Aorta (tissue), 5 donors: ENCODE measurements at regions of chr3 and their contacts with region 1.

Region 1: GRCh38 chr3:187107989-187108388 is 31.3 kb downstream of the RPL39L start:
- DNase-seq: peak in 1 of 2 donors; percentile 44
- ATAC-seq: peak; percentile 83
- H3K4me3 ChIP-seq: no peak overlapping the region
- H3K27ac ChIP-seq: peak overlapping the region; percentile 85 to 91
- H3K4me1 ChIP-seq: peaks cover 16 to 24% of the 10 kb centered on the region in 2 donors
- H3K27me3 ChIP-seq: no peaks in the 10 kb centered on the region

Region 2: DNA sequence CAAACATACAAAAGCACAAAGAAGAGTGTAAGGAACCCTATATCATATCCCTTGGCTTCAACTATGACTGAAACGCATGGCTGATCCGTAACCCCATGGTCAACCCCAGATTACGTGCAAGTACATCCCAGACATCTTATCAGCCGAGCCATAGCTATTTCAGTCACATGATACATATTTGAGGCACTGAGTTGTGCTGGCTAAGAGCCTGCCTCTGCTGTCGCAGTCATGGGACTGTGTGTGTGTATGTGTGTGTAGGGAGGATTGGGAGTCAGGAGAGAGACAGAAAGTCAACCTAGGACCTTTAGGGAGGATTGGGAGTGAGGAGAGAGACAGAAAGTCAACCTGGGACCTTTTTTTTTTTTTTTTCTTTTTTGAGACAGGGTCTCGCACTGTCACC is 169.3 kb before region 1 on chr3:
- intact Hi-C with region 1: loop called (anchors 2 to 5 kb)
- DNase-seq: peak in 1 of 2 donors; percentile 71
- ATAC-seq: peak; percentile 61
- H3K4me3 ChIP-seq: no peak overlapping the region
- H3K27ac ChIP-seq: peak overlapping the region; percentile 25 to 45
- H3K4me1 ChIP-seq: peaks cover 0 to 8% of the 10 kb centered on the region in 2 donors
- H3K27me3 ChIP-seq: no peaks in the 10 kb centered on the region

Region 3: DNA sequence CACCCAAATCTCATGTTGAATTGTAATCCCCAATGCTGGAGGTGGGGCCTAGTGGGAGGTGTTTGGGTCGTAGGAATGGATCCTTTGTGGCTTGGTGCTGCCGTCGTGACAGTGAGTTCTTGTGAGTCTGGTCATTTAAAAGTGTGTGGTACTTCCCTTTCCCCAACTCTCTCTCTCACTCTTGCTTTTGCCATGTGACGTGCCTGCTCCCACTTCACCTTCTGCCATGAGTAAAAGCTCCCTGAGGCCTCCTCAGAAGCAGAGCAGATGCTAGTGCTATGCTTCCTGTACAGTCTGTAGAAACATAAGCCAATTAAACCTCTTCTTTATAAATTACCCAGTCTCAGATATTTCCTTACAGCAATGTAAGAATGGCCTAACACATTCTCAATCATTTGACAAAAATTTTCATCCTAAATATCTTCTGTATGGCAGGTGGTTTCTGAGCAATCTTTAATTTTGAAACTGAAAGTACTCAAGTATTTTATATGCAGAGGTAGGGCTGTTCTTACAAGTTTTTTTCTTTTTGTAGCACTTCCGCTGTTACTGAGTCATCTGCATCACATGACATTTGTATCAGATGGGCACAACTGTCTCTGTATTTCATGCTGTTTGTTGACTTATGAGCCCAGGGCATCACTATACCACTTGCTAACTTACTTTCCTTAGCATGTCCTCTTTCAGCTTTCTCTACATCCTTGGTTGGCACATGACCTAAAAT is 22.5 kb after region 1 on chr3:
- intact Hi-C with region 1: no loop called
- DNase-seq: no peak
- ATAC-seq: peak; percentile 69
- H3K4me3 ChIP-seq: no peak overlapping the region
- H3K27ac ChIP-seq: peak overlapping the region; percentile 15 to 88
- H3K4me1 ChIP-seq: peaks cover 0 to 2% of the 10 kb centered on the region in 2 donors
- H3K27me3 ChIP-seq: no peaks in the 10 kb centered on the region